ENCODE measurements at regions of chr7 and their contacts with region 1.

Region 1: DNA sequence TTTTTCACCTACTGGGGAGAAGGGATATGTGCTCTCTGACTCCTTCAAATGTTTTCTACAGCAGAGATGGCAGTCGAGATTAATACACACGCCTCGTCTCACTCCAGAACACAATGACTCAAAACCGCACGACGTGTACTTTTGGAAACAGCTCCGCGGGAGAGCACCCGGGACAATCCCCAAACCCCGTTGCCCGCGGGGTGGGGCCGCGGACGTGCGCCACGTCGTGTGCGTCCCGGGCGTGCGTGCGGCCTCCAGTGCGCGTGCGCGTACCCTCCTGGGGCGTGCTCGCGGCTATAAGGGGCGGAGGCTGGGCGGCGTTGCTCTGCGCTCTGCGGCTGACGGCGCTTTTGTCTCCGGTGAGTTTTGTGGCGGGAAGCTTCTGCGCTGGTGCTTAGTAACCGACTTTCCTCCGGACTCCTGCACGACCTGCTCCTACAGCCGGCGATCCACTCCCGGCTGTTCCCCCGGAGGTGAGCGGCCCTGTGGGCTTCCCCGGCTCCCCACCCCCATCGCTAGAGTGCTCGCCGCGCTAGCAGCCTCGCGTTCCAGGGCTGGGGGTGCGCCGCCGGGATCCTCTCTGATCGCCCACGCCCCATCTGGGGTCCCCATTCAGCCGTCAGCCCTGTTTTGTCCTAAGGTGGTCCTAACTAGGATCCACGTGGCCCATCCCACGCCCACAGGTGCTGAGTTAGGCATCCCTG is at the start of gene HILPDA:
- DNase-seq: peak in 1 of 2 experiments; percentile 93
- H3K4me3 ChIP-seq: peak within 1 kb of the TSS; percentile 96 to 100 (median 100)
- H3K27ac ChIP-seq: peak within 1 kb of the TSS; percentile 93
- H3K4me1 ChIP-seq: peaks cover 9 to 20% (median 14%) of the 10 kb centered on the region in 4 experiments
- H3K27me3 ChIP-seq: no peaks in the 10 kb centered on the region; a peak in 2 of 7 replicates
- CTCF ChIP-seq: no peak
- EP300 ChIP-seq: no peak
- POLR2A ChIP-seq: peak; percentile 86 to 96
- RAD21 ChIP-seq: peak in 1 of 2 experiments; percentile 2; a peak in 1 of 4 replicates
- total RNA-seq, gene HILPDA: 33.9 and 35.6 TPM in 2 replicates

Region 2: DNA sequence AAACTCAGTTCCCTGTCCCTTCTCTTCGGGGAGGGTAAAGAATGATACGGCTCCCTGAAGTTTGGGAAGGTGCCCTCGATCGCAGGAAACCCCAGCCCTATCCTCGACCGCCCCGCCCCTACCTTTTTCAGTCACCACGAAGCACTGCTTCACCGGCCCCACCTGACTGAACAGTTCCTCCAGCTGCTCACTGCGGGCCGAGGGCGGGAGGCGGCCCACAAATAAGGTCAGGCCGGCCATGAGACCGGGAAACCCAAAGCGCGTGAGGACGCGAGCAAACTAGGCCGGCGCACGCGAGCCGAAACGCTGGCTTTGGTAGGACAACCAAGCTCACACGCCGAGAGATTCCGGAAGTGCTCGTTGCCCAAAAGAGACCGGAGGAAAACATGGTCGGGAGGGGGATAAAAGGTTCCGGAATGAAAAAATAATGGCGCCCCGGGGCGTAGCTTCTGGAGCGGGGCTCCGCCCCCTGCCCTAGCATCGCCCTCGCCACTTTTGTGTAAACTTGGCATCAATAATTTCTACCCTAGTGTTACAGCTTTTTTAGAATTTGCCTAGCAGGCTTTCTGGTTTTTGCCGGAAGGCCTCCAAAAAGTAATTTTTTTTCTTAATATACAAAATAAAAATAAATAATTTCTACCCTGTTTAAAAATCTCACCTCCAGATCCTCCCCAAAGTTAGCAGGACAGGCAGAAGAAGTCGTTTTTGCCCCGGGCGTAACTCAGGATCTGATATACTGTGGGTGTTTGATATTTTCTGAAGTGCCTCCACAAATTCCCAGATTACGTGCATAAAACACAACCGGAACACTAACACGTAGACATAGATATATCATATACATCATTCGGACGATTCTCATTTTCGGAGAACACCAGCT is 111.9 kb before region 1 on chr7 and contains the start of gene RBM28:
- CTCF ChIA-PET with region 1: interaction called, 18 read pairs
- POLR2A ChIA-PET with region 1: interaction called, 3 read pairs
- DNase-seq: peak; percentile 65 to 95
- H3K4me3 ChIP-seq: peak within 1 kb of the TSS; percentile 67 to 90 (median 88)
- H3K27ac ChIP-seq: peak within 1 kb of the TSS; percentile 90
- H3K4me1 ChIP-seq: peaks cover 0 to 5% (median 4%) of the 10 kb centered on the region in 4 experiments; a peak in 3 of 7 replicates
- H3K27me3 ChIP-seq: peaks cover under 1 to 7% (median 2%) of the 10 kb centered on the region in 4 experiments; a peak in 6 of 7 replicates
- CTCF ChIP-seq: no peak
- EP300 ChIP-seq: no peak
- POLR2A ChIP-seq: peak; percentile 85 to 91
- RAD21 ChIP-seq: 0 out of 4 replicates have a peak, but pooled peaks of 1 of the 2 experiments have one; percentile 9
- total RNA-seq, gene RBM28: 65.3 and 68.0 TPM in 2 replicates

Region 3: GRCh38 chr7:128409596-128410160 is 46.0 kb before region 1 on chr7 and contains the start of gene IMPDH1:
- CTCF ChIA-PET with region 1: interaction called, 188 read pairs
- POLR2A ChIA-PET with region 1: interaction called, 5 read pairs
- DNase-seq: peak in 1 of 2 experiments; percentile 97
- H3K4me3 ChIP-seq: peak within 1 kb of the TSS; percentile 52 to 78 (median 64)
- H3K27ac ChIP-seq: no peak within 1 kb of the TSS
- H3K4me1 ChIP-seq: peaks cover 0 to 30% (median 23%) of the 10 kb centered on the region in 4 experiments; a peak in 6 of 7 replicates
- H3K27me3 ChIP-seq: peaks cover 33 to 73% (median 53%) of the 10 kb centered on the region in 4 experiments
- CTCF ChIP-seq: no peak
- EP300 ChIP-seq: no peak
- POLR2A ChIP-seq: peak in 1 of 2 experiments; percentile 51; a peak in 1 of 3 replicates
- RAD21 ChIP-seq: no peak
- total RNA-seq, gene IMPDH1: 44.0 and 45.8 TPM in 2 replicates

Region 4: GRCh38 chr7:128431221-128431620 is 24.5 kb before region 1 on chr7:
- CTCF ChIA-PET with region 1: interaction called, 477 read pairs
- POLR2A ChIA-PET with region 1: interaction called, 15 read pairs
- DNase-seq: no peak
- H3K4me3 ChIP-seq: no peak overlapping the region
- H3K27ac ChIP-seq: no peak overlapping the region
- H3K4me1 ChIP-seq: peaks cover 3 to 12% (median 8%) of the 10 kb centered on the region in 4 experiments; a peak in 4 of 7 replicates
- H3K27me3 ChIP-seq: no peaks in the 10 kb centered on the region
- CTCF ChIP-seq: no peak
- EP300 ChIP-seq: no peak
- POLR2A ChIP-seq: no peak
- RAD21 ChIP-seq: no peak

Region 5: GRCh38 chr7:128443831-128444600 is 11.7 kb before region 1 on chr7:
- CTCF ChIA-PET with region 1: interaction called, 477 read pairs
- POLR2A ChIA-PET with region 1: interaction called, 18 read pairs
- DNase-seq: no peak
- H3K4me3 ChIP-seq: no peak overlapping the region
- H3K27ac ChIP-seq: no peak overlapping the region
- H3K4me1 ChIP-seq: no peaks in the 10 kb centered on the region
- H3K27me3 ChIP-seq: no peaks in the 10 kb centered on the region
- CTCF ChIP-seq: no peak
- EP300 ChIP-seq: no peak
- POLR2A ChIP-seq: no peak
- RAD21 ChIP-seq: no peak